CD4-positive, alpha-beta memory T cell (primary cell): ENCODE measurements at regions of chr3 and their contacts with region 1.

Region 1: DNA sequence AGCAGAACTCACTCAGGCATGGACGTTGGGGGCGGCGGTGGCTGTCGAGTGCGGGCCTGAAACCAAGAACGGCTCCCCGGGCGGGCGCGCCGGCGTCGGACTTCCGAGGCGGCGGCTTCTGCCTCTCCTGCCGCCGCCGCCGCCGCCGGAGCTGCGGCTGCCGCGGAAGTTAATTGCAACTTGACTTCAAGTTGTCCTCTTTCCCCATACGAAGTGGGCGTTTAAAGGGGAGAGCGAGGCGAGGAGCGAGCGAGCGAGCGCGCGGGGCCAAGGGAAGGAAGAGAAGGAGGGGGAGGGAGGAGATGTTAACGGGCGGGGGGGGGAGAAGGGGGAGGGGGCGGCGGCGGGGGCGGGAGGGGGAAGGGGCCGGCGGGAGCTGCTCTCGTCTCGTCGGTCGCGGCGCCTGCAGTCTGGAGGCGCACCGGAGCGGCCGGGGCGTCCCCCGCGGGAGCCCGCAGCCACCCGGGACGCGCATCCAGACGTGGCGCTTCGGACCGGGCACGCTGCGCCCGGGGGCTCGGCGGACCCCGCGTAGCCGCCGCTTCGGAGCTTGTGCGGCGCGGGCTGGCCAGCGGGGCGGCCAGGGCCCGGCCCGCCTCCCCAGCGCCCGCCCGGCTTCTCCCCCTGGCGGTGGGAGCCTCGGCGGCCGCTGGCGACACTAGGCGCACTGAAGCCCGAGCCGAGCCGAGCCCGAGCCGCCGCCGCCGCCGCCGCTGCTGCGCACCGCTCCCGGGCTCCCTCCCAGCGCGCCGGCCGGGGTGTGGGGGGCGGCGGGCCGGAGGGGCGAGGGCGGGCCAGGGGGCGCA is 19.7 kb upstream of the SATB1 start:
- DNase-seq: peak; percentile 79 to 88 (median 82)
- H3K4me3 ChIP-seq: peak overlapping the region; percentile 82 to 91
- H3K4me3 Mint-ChIP-seq: peak overlapping the region; percentile 93 to 98 (median 95)
- H3K27ac ChIP-seq: peak overlapping the region; percentile 83
- H3K27ac Mint-ChIP-seq: peak overlapping the region; percentile 79 to 96 (median 92)
- H3K4me1 ChIP-seq: peaks cover 47% of the 10 kb centered on the region
- H3K4me1 Mint-ChIP-seq: peaks cover 24 to 65% (median 43%) of the 10 kb centered on the region in 4 donors
- H3K27me3 ChIP-seq: no peaks in the 10 kb centered on the region
- H3K27me3 Mint-ChIP-seq: no peaks in the 10 kb centered on the region

Region 2: DNA sequence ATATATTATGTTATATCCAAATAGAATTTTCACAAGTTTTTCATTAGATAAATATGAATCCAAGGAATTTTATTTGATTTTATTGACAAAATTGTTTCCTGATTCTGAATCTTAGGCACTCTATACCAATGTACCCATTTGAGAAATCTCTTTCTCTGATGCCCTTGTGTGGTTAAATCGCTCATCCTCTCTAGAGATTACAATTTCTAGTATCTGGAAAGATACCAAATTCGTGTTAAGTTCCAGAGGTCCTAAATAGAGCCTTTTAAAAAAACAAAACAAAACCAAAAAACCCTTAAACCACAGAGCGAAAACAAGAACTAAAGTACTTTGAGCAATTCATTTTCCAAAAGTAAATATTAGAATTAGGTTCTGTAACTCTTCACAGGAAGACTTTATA is 39.7 kb before region 1 on chr3:
- CTCF ChIA-PET with region 1: interaction called, 6 read pairs
- POLR2A ChIA-PET with region 1: interaction called, 3 read pairs
- intact Hi-C with region 1: loop called (anchors 5 kb)
- DNase-seq: no peak
- H3K4me3 ChIP-seq: no peak overlapping the region
- H3K4me3 Mint-ChIP-seq: peak overlapping the region in 3 of 8 donors; percentile 35 to 55 (median 53)
- H3K27ac ChIP-seq: no peak overlapping the region
- H3K27ac Mint-ChIP-seq: peak overlapping the region in 4 of 7 donors; percentile 54 to 88 (median 70)
- H3K4me1 ChIP-seq: peaks cover 60% of the 10 kb centered on the region
- H3K4me1 Mint-ChIP-seq: peaks cover 53 to 89% (median 69%) of the 10 kb centered on the region in 4 donors
- H3K27me3 ChIP-seq: no peaks in the 10 kb centered on the region
- H3K27me3 Mint-ChIP-seq: no peaks in the 10 kb centered on the region

Region 3: DNA sequence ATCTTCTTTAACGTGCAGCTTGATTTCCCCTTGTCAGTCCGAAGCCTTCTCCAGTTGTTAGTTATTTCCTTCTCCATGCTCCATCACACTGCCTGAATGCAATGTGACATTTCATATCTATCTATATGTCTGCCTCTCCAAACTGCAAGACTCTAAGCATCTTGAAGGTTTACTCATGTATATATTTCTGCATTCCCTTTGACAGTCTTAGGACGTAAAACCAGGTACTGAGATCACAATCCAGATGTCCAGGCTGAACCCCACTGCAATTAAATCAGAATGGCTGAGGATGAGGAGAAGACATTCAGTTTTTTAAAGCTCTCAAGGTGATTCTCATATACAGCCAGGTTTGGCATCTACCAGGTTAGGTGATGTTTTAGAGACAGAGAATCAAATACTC is 13.5 kb before region 1 on chr3:
- CTCF ChIA-PET with region 1: interaction called, 5 read pairs
- POLR2A ChIA-PET with region 1: interaction called, 88 read pairs
- intact Hi-C with region 1: loop called (anchors 1 kb)
- DNase-seq: no peak
- H3K4me3 ChIP-seq: peak overlapping the region in 1 of 2 donors; percentile 8
- H3K4me3 Mint-ChIP-seq: peak overlapping the region; percentile 75 to 87 (median 84)
- H3K27ac ChIP-seq: peak overlapping the region; percentile 53
- H3K27ac Mint-ChIP-seq: peak overlapping the region; percentile 37 to 94 (median 77)
- H3K4me1 ChIP-seq: peaks cover 93% of the 10 kb centered on the region
- H3K4me1 Mint-ChIP-seq: peaks cover 59 to 86% (median 71%) of the 10 kb centered on the region in 4 donors
- H3K27me3 ChIP-seq: no peaks in the 10 kb centered on the region
- H3K27me3 Mint-ChIP-seq: no peaks in the 10 kb centered on the region

Region 4: GRCh38 chr3:18559331-18559842 is 114.6 kb after region 1 on chr3:
- CTCF ChIA-PET with region 1: interaction called, 16 read pairs
- POLR2A ChIA-PET with region 1: interaction called, 8 read pairs
- intact Hi-C with region 1: loop called (anchors 2 kb)
- DNase-seq: peak in 4 of 5 donors; percentile 38 to 52 (median 48)
- H3K4me3 ChIP-seq: no peak overlapping the region
- H3K4me3 Mint-ChIP-seq: peak overlapping the region in 6 of 8 donors; percentile 50 to 73 (median 58)
- H3K27ac ChIP-seq: no peak overlapping the region
- H3K27ac Mint-ChIP-seq: peak overlapping the region in 6 of 7 donors; percentile 55 to 85 (median 77)
- H3K4me1 ChIP-seq: peaks cover 43% of the 10 kb centered on the region
- H3K4me1 Mint-ChIP-seq: peaks cover 22 to 61% (median 41%) of the 10 kb centered on the region in 4 donors
- H3K27me3 ChIP-seq: no peaks in the 10 kb centered on the region
- H3K27me3 Mint-ChIP-seq: no peaks in the 10 kb centered on the region

Region 5: DNA sequence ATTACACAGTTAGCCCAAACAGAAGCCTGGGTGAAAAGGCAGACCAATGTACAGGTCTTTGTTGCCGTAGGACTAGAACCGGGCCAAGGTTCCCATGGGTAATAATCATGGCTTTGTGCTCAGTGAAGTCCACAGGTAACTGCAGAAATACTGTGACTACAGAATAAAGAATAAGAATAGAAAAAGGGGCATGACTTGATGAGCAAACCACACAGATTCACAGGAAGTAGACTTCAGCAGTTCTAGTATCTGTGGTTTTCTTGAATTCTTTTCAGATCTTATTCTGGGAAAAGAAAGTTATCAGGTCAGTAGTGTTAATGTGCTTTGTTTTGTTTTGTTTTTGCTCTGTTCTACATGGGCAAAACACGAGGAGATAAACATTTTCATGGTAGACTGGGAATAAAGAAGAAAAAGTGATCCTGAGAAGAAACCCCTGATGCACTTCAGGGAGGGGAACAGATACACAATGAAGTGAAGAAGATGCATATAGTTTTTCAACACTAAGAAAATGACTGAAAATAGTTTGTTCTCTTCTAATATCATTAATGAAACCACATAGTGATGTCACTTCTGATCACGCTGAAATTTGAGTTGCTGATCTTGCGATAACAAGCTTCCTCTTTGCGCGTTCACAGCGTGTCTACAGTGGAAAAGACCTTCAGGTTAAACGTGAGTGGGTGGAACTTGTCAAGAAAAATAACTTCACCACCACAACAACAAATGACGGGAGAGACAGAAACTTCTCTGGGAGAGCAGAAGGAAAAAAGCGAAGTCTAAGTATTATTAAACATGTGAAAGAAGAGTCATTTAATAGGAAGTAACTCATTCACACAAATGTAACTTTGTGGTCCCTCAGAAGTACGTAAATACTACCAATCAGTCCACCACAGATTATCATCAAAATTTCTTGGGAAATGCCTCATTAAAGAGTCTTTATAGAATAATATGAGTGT is 296.1 kb after region 1 on chr3:
- CTCF ChIA-PET with region 1: no interaction called
- POLR2A ChIA-PET with region 1: interaction called, 3 read pairs
- intact Hi-C with region 1: loop called (anchors 5 kb)
- DNase-seq: peak; percentile 78 to 87 (median 82)
- H3K4me3 ChIP-seq: peak overlapping the region in 1 of 2 donors; percentile 35
- H3K4me3 Mint-ChIP-seq: peak overlapping the region; percentile 69 to 87 (median 81)
- H3K27ac ChIP-seq: peak overlapping the region; percentile 60
- H3K27ac Mint-ChIP-seq: peak overlapping the region; percentile 88 to 97 (median 95)
- H3K4me1 ChIP-seq: peaks cover 79% of the 10 kb centered on the region
- H3K4me1 Mint-ChIP-seq: peaks cover 67 to 77% (median 72%) of the 10 kb centered on the region in 4 donors
- H3K27me3 ChIP-seq: no peaks in the 10 kb centered on the region
- H3K27me3 Mint-ChIP-seq: no peaks in the 10 kb centered on the region

Region 6: DNA sequence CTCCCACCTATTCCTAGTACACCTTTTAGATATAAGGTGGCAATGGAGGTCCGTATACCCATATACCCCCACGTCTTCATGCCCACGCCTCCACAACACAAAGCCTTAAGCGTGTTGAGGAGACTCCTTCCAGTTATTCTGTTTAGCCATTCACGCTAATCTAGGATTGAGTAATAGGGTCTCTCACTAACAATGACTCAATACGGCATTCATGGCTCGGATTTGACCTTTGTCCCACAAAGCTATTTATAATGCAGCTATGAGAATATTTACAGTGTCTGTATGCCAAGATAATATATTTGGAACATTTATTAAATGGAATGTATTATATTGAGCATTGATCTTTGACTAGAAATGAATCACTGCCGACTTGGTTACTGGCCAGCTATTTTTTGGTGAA is 919.4 kb after region 1 on chr3:
- CTCF ChIA-PET with region 1: no interaction called
- POLR2A ChIA-PET with region 1: no interaction called
- intact Hi-C with region 1: no loop called
- DNase-seq: no peak
- H3K4me3 ChIP-seq: no peak overlapping the region
- H3K4me3 Mint-ChIP-seq: no peak overlapping the region
- H3K27ac ChIP-seq: no peak overlapping the region
- H3K27ac Mint-ChIP-seq: peak overlapping the region in 1 of 7 donors; percentile 35
- H3K4me1 ChIP-seq: no peaks in the 10 kb centered on the region
- H3K4me1 Mint-ChIP-seq: no peaks in the 10 kb centered on the region
- H3K27me3 ChIP-seq: no peaks in the 10 kb centered on the region
- H3K27me3 Mint-ChIP-seq: no peaks in the 10 kb centered on the region